Esophagus muscularis mucosa (tissue), 4 donors: ENCODE measurements at regions of chr9 and their contacts with region 1.

Region 1: GRCh38 chr9:129737479-129738274 is 15.2 kb downstream of the PTGES start:
- DNase-seq: peak; percentile 96
- H3K4me3 ChIP-seq: peak overlapping the region; percentile 67 to 76 (median 70)
- H3K27ac ChIP-seq: peak overlapping the region; percentile 74 to 79 (median 75)
- H3K4me1 ChIP-seq: peaks cover 9 to 15% (median 13%) of the 10 kb centered on the region in 4 donors
- H3K27me3 ChIP-seq: peaks cover 0 to 12% (median 0%) of the 10 kb centered on the region in 4 donors
- CTCF ChIP-seq: peak; percentile 97 to 98 (median 97)
- EP300 ChIP-seq: no peak
- POLR2A ChIP-seq: no peak

Region 2: GRCh38 chr9:129557192-129558036 is 180.3 kb before region 1 on chr9:
- intact Hi-C with region 1: no loop called
- DNase-seq: no peak
- H3K4me3 ChIP-seq: no peak overlapping the region
- H3K27ac ChIP-seq: no peak overlapping the region
- H3K4me1 ChIP-seq: peaks cover 0 to 29% (median 20%) of the 10 kb centered on the region in 4 donors
- H3K27me3 ChIP-seq: no peaks in the 10 kb centered on the region
- CTCF ChIP-seq: no peak
- EP300 ChIP-seq: no peak
- POLR2A ChIP-seq: no peak

Region 3: GRCh38 chr9:129641746-129642513 is 95.7 kb before region 1 on chr9 and contains the start of gene ASB6:
- intact Hi-C with region 1: loop called (anchors 5 kb)
- DNase-seq: peak; percentile 99
- H3K4me3 ChIP-seq: peak within 1 kb of the TSS; percentile 82 to 96 (median 91)
- H3K27ac ChIP-seq: peak within 1 kb of the TSS; percentile 81 to 91 (median 86)
- H3K4me1 ChIP-seq: peaks cover 23 to 40% (median 36%) of the 10 kb centered on the region in 4 donors
- H3K27me3 ChIP-seq: no peaks in the 10 kb centered on the region
- CTCF ChIP-seq: peak in 2 of 3 experiments; percentile 100
- EP300 ChIP-seq: no peak
- POLR2A ChIP-seq: no peak
- total RNA-seq, gene ASB6: 13.3 to 30.0 (median 22.0) TPM